Tibial artery (tissue), 4 donors: ENCODE measurements at regions of chr7 and their contacts with region 1.

Region 1: GRCh38 chr7:39465055-39465929 is 100.9 kb upstream of the YAE1 start:
- DNase-seq: no peak
- H3K4me3 ChIP-seq: peak overlapping the region in 1 of 2 donors; percentile 10
- H3K27ac ChIP-seq: no peak overlapping the region
- H3K4me1 ChIP-seq: peaks cover 0 to 3% (median 0%) of the 10 kb centered on the region in 4 donors
- H3K27me3 ChIP-seq: no peaks in the 10 kb centered on the region
- CTCF ChIP-seq: peak; percentile 69 to 79

Region 2: GRCh38 chr7:38796626-38797501 is 668.4 kb before region 1 on chr7:
- intact Hi-C with region 1: loop called (anchors 2 kb)
- DNase-seq: peak in 1 of 2 donors; percentile 55
- H3K4me3 ChIP-seq: no peak overlapping the region
- H3K27ac ChIP-seq: no peak overlapping the region
- H3K4me1 ChIP-seq: no peaks in the 10 kb centered on the region
- H3K27me3 ChIP-seq: no peaks in the 10 kb centered on the region
- CTCF ChIP-seq: peak; percentile 72 to 76

Region 3: DNA sequence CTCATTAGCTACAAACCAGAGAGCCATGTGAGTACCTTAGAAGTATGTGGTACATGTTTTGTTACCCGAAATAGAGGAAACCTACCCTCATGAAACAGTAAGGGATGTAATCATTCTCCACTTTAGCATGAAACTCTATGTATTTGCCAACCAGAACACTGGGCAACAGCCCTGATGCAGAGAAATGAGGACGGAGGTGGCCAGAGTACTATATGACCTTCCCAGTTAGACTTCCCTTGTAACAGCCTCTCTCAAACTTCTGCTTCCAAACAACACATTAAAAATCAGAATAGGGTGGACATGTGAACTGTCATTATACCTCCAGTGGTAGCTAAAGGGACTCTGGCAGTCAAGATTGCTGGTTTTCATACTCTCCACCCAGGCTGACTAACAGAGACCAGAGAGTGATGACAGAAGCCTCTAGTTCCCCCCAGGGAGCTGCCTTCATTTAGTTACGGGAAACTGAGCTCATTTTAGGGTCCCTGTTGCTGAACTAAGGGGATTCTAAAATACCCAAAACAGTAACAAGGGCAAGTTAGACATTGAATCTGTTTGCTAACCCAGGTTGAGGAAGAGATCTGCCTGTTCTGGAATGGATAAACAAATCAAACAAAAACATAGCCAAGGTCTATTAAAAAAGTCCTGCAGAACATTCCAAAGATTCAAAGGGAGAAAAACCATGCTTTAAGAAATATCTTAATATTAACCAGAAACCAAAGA is 639.4 kb before region 1 on chr7:
- intact Hi-C with region 1: no loop called
- DNase-seq: no peak
- H3K4me3 ChIP-seq: peak overlapping the region in 1 of 2 donors; percentile 13
- H3K27ac ChIP-seq: peak overlapping the region; percentile 57 to 58
- H3K4me1 ChIP-seq: peaks cover 0 to 20% (median 5%) of the 10 kb centered on the region in 4 donors
- H3K27me3 ChIP-seq: no peaks in the 10 kb centered on the region
- CTCF ChIP-seq: no peak

Region 4: GRCh38 chr7:38932509-38933168 is 532.7 kb before region 1 on chr7:
- intact Hi-C with region 1: loop called (anchors 5 kb)
- DNase-seq: peak; percentile 49 to 69
- H3K4me3 ChIP-seq: no peak overlapping the region
- H3K27ac ChIP-seq: no peak overlapping the region
- H3K4me1 ChIP-seq: peaks cover 0 to 7% (median 0%) of the 10 kb centered on the region in 4 donors
- H3K27me3 ChIP-seq: no peaks in the 10 kb centered on the region
- CTCF ChIP-seq: peak; percentile 88 to 89

Region 5: GRCh38 chr7:39217783-39218182 is 247.5 kb before region 1 on chr7:
- intact Hi-C with region 1: no loop called
- DNase-seq: no peak
- H3K4me3 ChIP-seq: no peak overlapping the region
- H3K27ac ChIP-seq: no peak overlapping the region
- H3K4me1 ChIP-seq: no peaks in the 10 kb centered on the region
- H3K27me3 ChIP-seq: no peaks in the 10 kb centered on the region
- CTCF ChIP-seq: no peak